ENCODE measurements at regions of chr16 and their contacts with region 1.

Region 1: GRCh38 chr16:75198135-75198600 is 8.8 kb downstream of the CTRB2 start:
- H3K4me3 ChIP-seq: no peak overlapping the region
- H3K27ac ChIP-seq: no peak overlapping the region
- H3K4me1 ChIP-seq: no peaks in the 10 kb centered on the region
- CTCF ChIP-seq: no peak

Region 2: DNA sequence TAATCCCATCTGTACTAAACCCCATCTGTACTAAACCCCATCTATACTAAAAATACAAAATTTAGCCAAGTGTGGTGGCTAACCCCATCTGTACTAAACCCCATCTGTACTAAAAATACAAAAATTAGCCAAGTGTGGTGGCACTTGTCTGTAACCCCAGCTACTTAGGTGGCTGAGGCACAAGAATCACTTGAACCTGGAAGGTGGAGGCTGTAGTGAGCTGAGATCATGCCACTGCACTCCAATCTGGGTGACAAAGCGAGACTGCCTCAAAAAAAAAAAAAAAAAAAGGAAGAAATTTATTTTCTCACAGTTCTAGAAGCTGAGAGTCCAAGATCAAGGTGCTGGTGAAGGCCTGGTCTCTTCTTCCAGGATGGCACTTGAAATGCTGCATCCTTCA is 37.8 kb before region 1 on chr16:
- CTCF ChIA-PET with region 1: no interaction called
- POLR2A ChIA-PET with region 1: no interaction called
- H3K4me3 ChIP-seq: no peak overlapping the region
- H3K27ac ChIP-seq: no peak overlapping the region
- H3K4me1 ChIP-seq: no peaks in the 10 kb centered on the region
- CTCF ChIP-seq: no peak

Region 3: DNA sequence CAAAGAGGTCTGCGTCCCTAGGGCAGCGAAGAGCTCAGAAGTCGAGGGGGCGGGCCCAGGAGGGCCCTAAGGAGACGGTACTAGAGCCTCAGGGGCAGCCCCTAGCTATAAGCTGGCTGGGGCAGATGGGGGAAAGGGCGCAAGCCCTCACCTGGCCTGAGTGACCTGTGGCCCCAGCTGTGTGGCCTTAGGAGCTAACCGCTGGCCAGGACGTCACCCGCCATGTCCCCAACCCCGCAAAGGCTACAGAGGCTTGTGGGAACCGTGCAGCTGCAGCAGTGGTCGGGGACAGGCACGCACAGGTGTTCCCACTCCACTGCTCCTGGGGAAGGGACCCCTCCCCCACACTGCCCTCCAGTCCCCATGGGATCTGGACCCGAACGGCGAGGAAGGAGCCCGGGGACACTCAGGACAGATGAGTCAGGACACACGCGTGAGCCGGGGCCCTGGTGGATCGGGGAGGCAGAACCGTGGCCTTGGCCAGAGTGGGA is 10.8 kb after region 1 on chr16:
- CTCF ChIA-PET with region 1: interaction called, 11 read pairs
- POLR2A ChIA-PET with region 1: no interaction called
- H3K4me3 ChIP-seq: no peak overlapping the region
- H3K27ac ChIP-seq: no peak overlapping the region
- H3K4me1 ChIP-seq: no peaks in the 10 kb centered on the region
- CTCF ChIP-seq: no peak

Region 4: GRCh38 chr16:75234856-75235696 is 36.9 kb after region 1 on chr16:
- CTCF ChIA-PET with region 1: interaction called, 19 read pairs
- POLR2A ChIA-PET with region 1: no interaction called
- H3K4me3 ChIP-seq: no peak overlapping the region
- H3K27ac ChIP-seq: no peak overlapping the region
- H3K4me1 ChIP-seq: peaks cover 4% of the 10 kb centered on the region; the same call in 1 of the 2 replicates
- CTCF ChIP-seq: no peak

Region 5: DNA sequence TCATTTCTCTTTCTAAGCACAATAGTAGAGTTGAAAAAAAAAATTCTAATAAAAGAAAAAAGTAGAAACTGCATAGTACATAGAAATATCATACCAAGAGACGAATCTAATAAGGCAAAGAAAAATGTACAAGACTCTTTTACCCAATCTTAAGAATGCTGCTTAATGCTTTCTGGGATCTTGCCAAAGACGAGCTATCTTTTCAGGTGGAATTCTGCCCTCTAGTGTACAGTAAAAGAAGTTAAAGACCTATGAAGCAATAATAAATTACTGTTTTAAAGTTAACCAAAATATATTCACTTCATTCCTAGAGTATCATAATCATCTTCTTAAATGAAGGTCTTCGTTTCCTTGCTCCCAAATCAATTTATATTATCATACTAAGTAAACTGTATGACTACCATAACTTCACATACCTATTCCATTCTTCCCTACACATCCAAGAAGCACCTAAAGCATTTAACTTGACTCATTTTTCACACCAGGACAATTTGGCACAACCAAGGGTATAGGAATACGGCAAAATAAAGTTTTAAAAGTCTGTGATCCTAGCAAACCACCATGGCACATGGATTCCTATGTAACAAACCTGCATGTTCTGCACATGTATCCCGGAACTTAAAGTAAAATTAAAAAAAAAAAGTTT is 187.5 kb after region 1 on chr16:
- CTCF ChIA-PET with region 1: interaction called, 30 read pairs
- POLR2A ChIA-PET with region 1: interaction called, 5 read pairs
- H3K4me3 ChIP-seq: no peak overlapping the region
- H3K27ac ChIP-seq: no peak overlapping the region
- H3K4me1 ChIP-seq: no peaks in the 10 kb centered on the region
- CTCF ChIP-seq: 0 out of 2 replicates have a peak, but pooled peaks have one; percentile 24

Region 6: GRCh38 chr16:75402821-75403475 is 204.8 kb after region 1 on chr16:
- CTCF ChIA-PET with region 1: interaction called, 23 read pairs
- POLR2A ChIA-PET with region 1: no interaction called
- H3K4me3 ChIP-seq: no peak overlapping the region
- H3K27ac ChIP-seq: no peak overlapping the region
- H3K4me1 ChIP-seq: no peaks in the 10 kb centered on the region
- CTCF ChIP-seq: 0 out of 2 replicates have a peak, but pooled peaks have one; percentile 19

Region 7: GRCh38 chr16:75764154-75764768 is 566.1 kb after region 1 on chr16:
- CTCF ChIA-PET with region 1: interaction called, 15 read pairs
- POLR2A ChIA-PET with region 1: no interaction called
- H3K4me3 ChIP-seq: no peak overlapping the region
- H3K27ac ChIP-seq: no peak overlapping the region
- H3K4me1 ChIP-seq: no peaks in the 10 kb centered on the region
- CTCF ChIP-seq: peak; percentile 64; the same call in 1 of the 2 replicates

Region 8: GRCh38 chr16:76265434-76266045 is 1067.4 kb after region 1 on chr16:
- CTCF ChIA-PET with region 1: no interaction called
- POLR2A ChIA-PET with region 1: no interaction called
- H3K4me3 ChIP-seq: no peak overlapping the region
- H3K27ac ChIP-seq: no peak overlapping the region
- H3K4me1 ChIP-seq: no peaks in the 10 kb centered on the region
- CTCF ChIP-seq: no peak